K562 (cell line): ENCODE measurements at regions of chr19 and their contacts with region 1.

Region 1: GRCh38 chr19:12365236-12366162 is at the start of gene ZNF442:
- DNase-seq: peak; percentile 89 to 96 (median 92)
- ATAC-seq: peak; percentile 99
- H3K4me3 ChIP-seq: peak within 1 kb of the TSS; percentile 84
- H3K27ac ChIP-seq: peak within 1 kb of the TSS; percentile 84
- H3K4me1 ChIP-seq: peaks cover 3 to 16% of the 10 kb centered on the region in 2 experiments; a peak in 4 of 5 replicates
- H3K27me3 ChIP-seq: no peaks in the 10 kb centered on the region; a peak in 1 of 5 replicates
- CTCF ChIP-seq: peak; percentile 52 to 70 (median 56)
- EP300 ChIP-seq: no peak
- POLR2A ChIP-seq: peak; percentile 91
- RAD21 ChIP-seq: peak; percentile 52 to 66
- polyA plus RNA-seq, gene ZNF442: 3.1 to 5.5 TPM

Region 2: DNA sequence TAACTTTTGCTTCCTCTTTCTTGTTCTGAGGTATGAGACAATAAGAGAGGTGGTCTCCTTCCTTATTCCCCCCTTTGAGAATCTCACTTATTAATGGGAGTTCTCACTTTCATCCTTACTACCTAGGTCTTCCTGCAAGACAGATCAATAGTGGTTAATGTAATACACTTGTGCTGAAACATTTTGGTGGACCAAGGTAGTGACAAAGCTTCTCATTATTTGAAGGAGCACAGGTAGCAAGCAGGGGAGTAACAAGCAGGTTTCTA is 422.7 kb before region 1 on chr19:
- CTCF ChIA-PET with region 1: no interaction called
- POLR2A ChIA-PET with region 1: no interaction called
- in situ Hi-C with region 1: no loop called
- intact Hi-C with region 1: no loop called
- DNase-seq: peak in 1 of 4 experiments; percentile 28
- ATAC-seq: no peak
- H3K4me3 ChIP-seq: no peak overlapping the region
- H3K27ac ChIP-seq: no peak overlapping the region
- H3K4me1 ChIP-seq: no peaks in the 10 kb centered on the region
- H3K27me3 ChIP-seq: no peaks in the 10 kb centered on the region
- CTCF ChIP-seq: no peak
- EP300 ChIP-seq: peak; percentile 50; the same call in 1 of the 2 replicates
- POLR2A ChIP-seq: no peak
- RAD21 ChIP-seq: no peak

Region 3: DNA sequence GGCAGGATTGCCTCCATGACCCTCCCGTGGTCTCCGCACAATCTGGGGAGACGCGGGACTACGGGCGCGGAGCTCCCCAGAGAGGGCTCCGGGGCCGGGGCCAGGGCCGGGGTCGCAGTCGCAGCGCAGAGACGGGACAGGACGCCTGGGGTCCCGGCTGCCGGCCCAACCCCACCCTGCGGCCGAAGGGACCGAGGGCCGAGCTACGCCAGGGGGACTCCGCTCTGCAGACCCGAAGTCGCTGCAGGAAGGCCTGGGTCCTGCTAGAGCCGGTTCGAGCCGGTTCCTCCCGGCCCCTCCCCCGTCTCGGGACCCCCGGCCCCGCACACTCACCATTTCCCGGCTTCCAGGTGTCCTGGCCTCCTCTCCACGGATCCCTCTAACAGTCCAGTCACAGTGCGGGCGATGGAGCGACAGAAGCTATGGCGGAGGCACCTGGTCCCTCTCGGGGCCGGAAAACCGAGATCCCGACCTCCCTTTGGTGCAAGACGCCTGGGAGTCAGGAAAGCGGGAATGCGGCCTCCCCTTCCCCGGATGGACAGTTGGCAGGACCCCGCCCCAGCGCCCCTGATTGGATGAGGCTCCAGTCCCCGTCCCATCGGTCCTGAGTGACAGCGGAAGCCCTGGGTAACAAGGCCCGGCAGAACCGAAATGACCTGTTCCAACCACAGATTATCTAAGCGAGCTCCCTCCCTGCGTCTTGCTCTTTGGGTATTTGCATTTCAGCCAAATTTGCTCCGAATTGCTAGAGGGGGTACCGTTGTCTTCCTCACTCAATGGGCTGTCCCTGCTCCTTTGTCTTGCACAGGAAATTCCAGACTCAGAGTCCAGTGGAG is 209.1 kb before region 1 on chr19 and contains the start of gene ZNF625:
- CTCF ChIA-PET with region 1: no interaction called
- POLR2A ChIA-PET with region 1: no interaction called
- in situ Hi-C with region 1: no loop called
- intact Hi-C with region 1: no loop called
- DNase-seq: no peak
- ATAC-seq: no peak
- H3K4me3 ChIP-seq: no peak within 1 kb of the TSS
- H3K27ac ChIP-seq: no peak within 1 kb of the TSS
- H3K4me1 ChIP-seq: peaks cover 0 to 10% of the 10 kb centered on the region in 2 experiments; a peak in 2 of 5 replicates
- H3K27me3 ChIP-seq: peaks cover 6 to 23% of the 10 kb centered on the region in 2 experiments; a peak in 3 of 5 replicates
- CTCF ChIP-seq: no peak
- EP300 ChIP-seq: no peak
- POLR2A ChIP-seq: no peak
- RAD21 ChIP-seq: no peak
- polyA plus RNA-seq, gene ZNF625: not detected

Region 4: GRCh38 chr19:12294249-12295158 is 71.0 kb before region 1 on chr19 and contains the start of gene ZNF44:
- CTCF ChIA-PET with region 1: no interaction called
- POLR2A ChIA-PET with region 1: interaction called, 4 read pairs
- in situ Hi-C with region 1: no loop called
- intact Hi-C with region 1: loop called (anchors 2 kb)
- DNase-seq: peak; percentile 88 to 96 (median 92)
- ATAC-seq: peak; percentile 97
- H3K4me3 ChIP-seq: peak within 1 kb of the TSS; percentile 85
- H3K27ac ChIP-seq: peak within 1 kb of the TSS; percentile 83
- H3K4me1 ChIP-seq: peaks cover 5 to 10% of the 10 kb centered on the region in 2 experiments
- H3K27me3 ChIP-seq: no peaks in the 10 kb centered on the region
- CTCF ChIP-seq: no peak
- EP300 ChIP-seq: no peak
- POLR2A ChIP-seq: peak; percentile 74
- RAD21 ChIP-seq: no peak
- polyA plus RNA-seq, gene ZNF44: 2.7 to 5.7 TPM

Region 5: GRCh38 chr19:12345197-12345596 is 20.3 kb before region 1 on chr19:
- CTCF ChIA-PET with region 1: no interaction called
- POLR2A ChIA-PET with region 1: no interaction called
- in situ Hi-C with region 1: no loop called
- intact Hi-C with region 1: no loop called
- DNase-seq: no peak
- ATAC-seq: no peak
- H3K4me3 ChIP-seq: no peak overlapping the region
- H3K27ac ChIP-seq: no peak overlapping the region
- H3K4me1 ChIP-seq: no peaks in the 10 kb centered on the region
- H3K27me3 ChIP-seq: no peaks in the 10 kb centered on the region; a peak in 1 of 5 replicates
- CTCF ChIP-seq: no peak
- EP300 ChIP-seq: no peak
- POLR2A ChIP-seq: no peak
- RAD21 ChIP-seq: no peak